Activated B cell treated with CpG ODN at 0.5 μM for 24 hours (primary cell): ENCODE measurements at regions of chr5 and their contacts with region 1.

Region 1: DNA sequence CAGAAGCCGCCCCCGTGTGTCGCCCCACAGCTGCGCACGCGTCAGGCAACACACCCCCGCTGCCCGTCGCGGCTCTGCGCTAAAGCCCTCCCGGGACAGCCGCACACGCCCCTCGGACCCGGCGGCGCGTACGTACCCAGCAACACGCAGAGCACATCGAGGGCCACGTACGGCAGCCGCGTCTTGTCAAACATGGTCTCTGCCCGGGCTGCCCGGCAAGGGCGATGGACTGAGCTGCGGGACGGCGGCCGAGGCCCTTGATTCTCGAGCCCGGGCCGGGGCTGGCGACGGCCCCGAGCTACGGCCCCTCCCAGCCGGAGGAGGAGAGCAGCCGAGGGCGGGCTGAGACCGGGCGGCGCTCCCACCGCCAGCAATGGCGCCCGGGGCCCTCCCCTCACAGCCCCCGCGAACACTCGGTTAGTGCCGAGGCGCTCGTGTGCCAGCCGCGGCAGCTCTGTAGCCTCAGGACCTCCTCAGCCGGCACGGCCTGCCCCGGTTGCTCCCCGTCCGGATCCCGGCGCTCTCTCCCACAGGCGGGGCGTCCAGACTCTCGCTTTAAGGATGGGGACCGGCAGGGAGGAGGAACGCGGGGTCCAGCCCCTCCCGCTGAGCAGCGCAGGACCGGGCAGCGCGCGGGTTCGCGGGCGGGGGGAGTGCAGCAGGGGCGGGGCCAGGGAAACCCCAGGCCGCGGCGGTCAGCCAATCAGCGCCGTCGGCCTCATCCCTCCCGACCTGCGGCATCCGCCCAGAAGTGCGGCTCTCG is at the start of gene PLPP1:
- DNase-seq: peak; percentile 89
- ATAC-seq: peak; percentile 79
- H3K4me3 Mint-ChIP-seq: peak within 1 kb of the TSS; percentile 90
- H3K27ac Mint-ChIP-seq: peak within 1 kb of the TSS; percentile 87
- H3K4me1 Mint-ChIP-seq: peaks cover 25% of the 10 kb centered on the region
- H3K27me3 Mint-ChIP-seq: no peaks in the 10 kb centered on the region
- CTCF ChIP-seq: no peak
- total RNA-seq, gene PLPP1: 10.3 and 12.0 TPM in 2 replicates

Region 2: GRCh38 chr5:55232985-55233928 is 301.4 kb before region 1 on chr5 and contains the start of gene CCNO:
- CTCF ChIA-PET with region 1: no interaction called
- POLR2A ChIA-PET with region 1: no interaction called
- intact Hi-C with region 1: loop called (anchors 5 kb)
- DNase-seq: peak; percentile 45
- ATAC-seq: peak; percentile 77
- H3K4me3 Mint-ChIP-seq: peak within 1 kb of the TSS; percentile 81
- H3K27ac Mint-ChIP-seq: no peak within 1 kb of the TSS
- H3K4me1 Mint-ChIP-seq: peaks cover 29% of the 10 kb centered on the region
- H3K27me3 Mint-ChIP-seq: peaks cover 66% of the 10 kb centered on the region
- CTCF ChIP-seq: no peak
- total RNA-seq, gene CCNO: not detected in 2 replicates

Region 3: DNA sequence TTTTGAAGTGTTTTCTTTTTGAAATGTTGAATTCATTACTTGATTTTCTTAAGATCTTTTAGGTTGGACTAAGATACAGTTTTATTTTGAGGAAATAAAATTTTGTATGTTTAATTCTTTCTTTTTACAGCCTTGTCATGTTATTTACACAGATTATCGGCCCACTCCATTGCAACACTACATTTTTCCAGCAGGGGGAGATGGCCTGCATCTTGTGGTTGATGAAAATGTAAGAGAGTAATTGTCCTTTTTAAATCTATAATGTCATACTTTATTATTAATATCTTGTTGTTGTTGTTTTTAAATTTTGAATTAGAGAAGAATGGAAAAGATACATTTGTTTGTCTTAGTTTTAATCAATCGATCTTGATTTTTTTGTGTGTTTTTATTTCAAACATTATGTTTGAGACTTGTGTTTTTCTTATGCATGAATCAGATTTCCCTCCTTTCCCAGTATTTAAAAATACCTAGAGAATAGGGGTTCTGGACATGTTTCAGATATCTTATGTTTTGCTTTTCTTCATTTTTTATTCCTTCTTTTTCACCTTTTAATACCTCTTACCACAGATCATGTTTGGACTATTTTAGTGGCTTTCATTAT is 190.1 kb before region 1 on chr5:
- CTCF ChIA-PET with region 1: no interaction called
- POLR2A ChIA-PET with region 1: no interaction called
- intact Hi-C with region 1: loop called (anchors 10 kb)
- DNase-seq: no peak
- ATAC-seq: peak; percentile 52
- H3K4me3 Mint-ChIP-seq: no peak overlapping the region
- H3K27ac Mint-ChIP-seq: peak overlapping the region; percentile 41
- H3K4me1 Mint-ChIP-seq: peaks cover 3% of the 10 kb centered on the region
- H3K27me3 Mint-ChIP-seq: no peaks in the 10 kb centered on the region
- CTCF ChIP-seq: no peak

Region 4: DNA sequence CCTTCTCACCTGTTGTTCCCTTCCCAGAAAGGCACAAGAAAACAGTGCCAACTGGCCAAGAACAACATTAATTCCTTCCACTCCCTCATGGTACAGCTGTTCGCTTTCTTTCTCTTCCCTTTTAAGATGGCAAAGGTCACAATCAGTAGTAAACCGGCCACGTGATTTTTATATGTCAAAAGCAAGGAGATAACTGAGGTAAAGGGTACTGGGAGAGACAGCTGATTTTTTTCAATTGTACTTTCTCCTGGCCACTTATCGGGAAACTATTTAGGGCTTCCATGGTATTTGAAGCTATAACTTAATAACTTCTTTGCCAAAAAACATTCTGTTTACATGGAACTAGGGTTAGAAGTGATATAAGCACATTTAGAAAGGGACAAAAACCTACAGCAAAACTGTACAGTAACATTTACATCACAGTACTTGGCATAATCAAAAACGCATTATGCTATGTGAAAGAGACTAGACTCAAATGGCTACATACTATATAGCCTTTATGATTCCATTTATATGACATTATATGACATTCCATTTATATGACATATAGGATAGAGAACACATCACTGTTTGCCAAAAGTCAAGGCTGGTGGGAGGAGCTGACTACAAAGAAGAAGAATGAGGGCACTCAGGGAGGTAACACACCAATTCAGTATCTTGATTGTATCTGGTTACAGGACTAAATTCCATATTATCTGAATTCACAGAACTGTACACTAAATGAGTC is 24.7 kb before region 1 on chr5:
- CTCF ChIA-PET with region 1: no interaction called
- POLR2A ChIA-PET with region 1: no interaction called
- intact Hi-C with region 1: no loop called
- DNase-seq: no peak
- ATAC-seq: no peak
- H3K4me3 Mint-ChIP-seq: no peak overlapping the region
- H3K27ac Mint-ChIP-seq: no peak overlapping the region
- H3K4me1 Mint-ChIP-seq: no peaks in the 10 kb centered on the region
- H3K27me3 Mint-ChIP-seq: no peaks in the 10 kb centered on the region
- CTCF ChIP-seq: no peak

Region 5: GRCh38 chr5:55711968-55712859 is 177.6 kb after region 1 on chr5 and contains the start of gene SLC38A9:
- CTCF ChIA-PET with region 1: no interaction called
- POLR2A ChIA-PET with region 1: interaction called, 3 read pairs
- intact Hi-C with region 1: loop called (anchors 2 kb)
- DNase-seq: peak; percentile 91
- ATAC-seq: peak; percentile 100
- H3K4me3 Mint-ChIP-seq: peak within 1 kb of the TSS; percentile 100
- H3K27ac Mint-ChIP-seq: peak within 1 kb of the TSS; percentile 92
- H3K4me1 Mint-ChIP-seq: peaks cover 17% of the 10 kb centered on the region
- H3K27me3 Mint-ChIP-seq: no peaks in the 10 kb centered on the region
- CTCF ChIP-seq: no peak
- total RNA-seq, gene SLC38A9: 26.6 and 29.9 TPM in 2 replicates

Region 6: GRCh38 chr5:56909294-56910209 is 1374.9 kb after region 1 on chr5 and contains the start of gene SETD9:
- CTCF ChIA-PET with region 1: no interaction called
- POLR2A ChIA-PET with region 1: no interaction called
- intact Hi-C with region 1: loop called (anchors 2 kb)
- DNase-seq: peak; percentile 93
- ATAC-seq: peak; percentile 85
- H3K4me3 Mint-ChIP-seq: peak within 1 kb of the TSS; percentile 96
- H3K27ac Mint-ChIP-seq: peak within 1 kb of the TSS; percentile 96
- H3K4me1 Mint-ChIP-seq: peaks cover 20% of the 10 kb centered on the region
- H3K27me3 Mint-ChIP-seq: no peaks in the 10 kb centered on the region
- CTCF ChIP-seq: no peak
- total RNA-seq, gene SETD9: 3.4 and 6.2 TPM in 2 replicates